Uterus (tissue), 4 donors: ENCODE measurements at regions of chr7 and their contacts with region 1.

Region 1: GRCh38 chr7:48109848-48110663 is 21.0 kb downstream of the UPP1 start:
- DNase-seq: peak; percentile 72 to 77
- H3K4me3 ChIP-seq: no peak overlapping the region
- H3K27ac ChIP-seq: no peak overlapping the region
- H3K4me1 ChIP-seq: no peaks in the 10 kb centered on the region
- H3K27me3 ChIP-seq: no peaks in the 10 kb centered on the region
- CTCF ChIP-seq: peak; percentile 92 to 99 (median 96)
- POLR2A ChIP-seq: peak in 1 of 2 donors; percentile 22

Region 2: GRCh38 chr7:47914717-47915615 is 195.1 kb before region 1 on chr7:
- intact Hi-C with region 1: no loop called
- DNase-seq: no peak
- H3K4me3 ChIP-seq: no peak overlapping the region
- H3K27ac ChIP-seq: no peak overlapping the region
- H3K4me1 ChIP-seq: no peaks in the 10 kb centered on the region
- H3K27me3 ChIP-seq: no peaks in the 10 kb centered on the region
- CTCF ChIP-seq: no peak
- POLR2A ChIP-seq: no peak

Region 3: GRCh38 chr7:47945261-47946001 is 164.6 kb before region 1 on chr7:
- intact Hi-C with region 1: loop called (anchors 10 kb)
- DNase-seq: peak; percentile 72 to 80
- H3K4me3 ChIP-seq: no peak overlapping the region
- H3K27ac ChIP-seq: peak overlapping the region in 1 of 2 donors; percentile 23
- H3K4me1 ChIP-seq: no peaks in the 10 kb centered on the region
- H3K27me3 ChIP-seq: no peaks in the 10 kb centered on the region
- CTCF ChIP-seq: peak; percentile 66 to 80 (median 76)
- POLR2A ChIP-seq: no peak

Region 4: GRCh38 chr7:47991741-47992311 is 118.2 kb before region 1 on chr7:
- intact Hi-C with region 1: loop called (anchors 10 kb)
- DNase-seq: peak; percentile 78 to 80
- H3K4me3 ChIP-seq: peak overlapping the region; percentile 36 to 37
- H3K27ac ChIP-seq: peak overlapping the region; percentile 25 to 55
- H3K4me1 ChIP-seq: no peaks in the 10 kb centered on the region
- H3K27me3 ChIP-seq: no peaks in the 10 kb centered on the region
- CTCF ChIP-seq: peak; percentile 63 to 71 (median 65)
- POLR2A ChIP-seq: no peak

Region 5: GRCh38 chr7:48035301-48035966 is 74.6 kb before region 1 on chr7 and contains the start of gene C7orf57:
- intact Hi-C with region 1: loop called (anchors 10 kb)
- DNase-seq: peak; percentile 73 to 83
- H3K4me3 ChIP-seq: peak within 1 kb of the TSS; percentile 30 to 37
- H3K27ac ChIP-seq: no peak within 1 kb of the TSS
- H3K4me1 ChIP-seq: no peaks in the 10 kb centered on the region
- H3K27me3 ChIP-seq: no peaks in the 10 kb centered on the region
- CTCF ChIP-seq: peak; percentile 15 to 46 (median 34)
- POLR2A ChIP-seq: no peak
- total RNA-seq, gene C7orf57: 0.76 TPM in 1 of 4 donors, not detected in the others

Region 6: GRCh38 chr7:48144291-48144768 is 34.3 kb after region 1 on chr7:
- intact Hi-C with region 1: no loop called
- DNase-seq: no peak
- H3K4me3 ChIP-seq: no peak overlapping the region
- H3K27ac ChIP-seq: no peak overlapping the region
- H3K4me1 ChIP-seq: no peaks in the 10 kb centered on the region
- H3K27me3 ChIP-seq: no peaks in the 10 kb centered on the region
- CTCF ChIP-seq: no peak
- POLR2A ChIP-seq: no peak

Region 7: GRCh38 chr7:48173756-48174382 is 63.8 kb after region 1 on chr7:
- intact Hi-C with region 1: no loop called
- DNase-seq: no peak
- H3K4me3 ChIP-seq: no peak overlapping the region
- H3K27ac ChIP-seq: no peak overlapping the region
- H3K4me1 ChIP-seq: no peaks in the 10 kb centered on the region
- H3K27me3 ChIP-seq: no peaks in the 10 kb centered on the region
- CTCF ChIP-seq: no peak
- POLR2A ChIP-seq: no peak

Region 8: DNA sequence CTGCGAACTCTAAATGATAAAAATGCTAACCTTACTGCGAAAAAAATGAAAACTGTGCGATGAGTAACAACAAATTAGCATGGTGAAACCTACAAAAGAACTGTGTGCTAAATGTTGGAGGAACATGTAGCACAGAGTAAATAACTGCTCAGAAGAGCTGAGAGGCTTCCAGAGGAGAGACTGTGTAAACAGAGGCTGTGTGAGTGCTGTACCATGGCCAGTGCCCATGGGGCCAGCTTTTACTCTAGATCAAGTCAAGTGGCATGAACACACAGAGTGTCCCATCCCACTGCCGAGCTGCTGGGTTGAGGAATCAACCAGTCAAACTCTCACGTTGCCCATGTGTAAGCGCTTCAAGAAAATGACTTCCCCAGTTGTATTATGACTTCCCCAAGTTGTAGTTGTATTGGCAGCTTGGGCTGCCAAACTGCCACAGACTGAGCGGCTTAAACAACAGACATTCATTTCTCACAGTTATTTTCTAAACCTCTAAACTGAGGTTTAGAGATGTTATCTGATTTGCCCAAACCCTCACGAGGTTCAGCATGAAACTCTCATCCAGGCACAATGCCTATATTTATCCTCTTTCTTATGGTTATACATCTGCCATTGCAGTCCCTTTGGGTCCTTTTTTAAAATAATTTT is 331.9 kb after region 1 on chr7:
- intact Hi-C with region 1: no loop called
- DNase-seq: no peak
- H3K4me3 ChIP-seq: no peak overlapping the region
- H3K27ac ChIP-seq: no peak overlapping the region
- H3K4me1 ChIP-seq: no peaks in the 10 kb centered on the region
- H3K27me3 ChIP-seq: no peaks in the 10 kb centered on the region
- CTCF ChIP-seq: no peak
- POLR2A ChIP-seq: no peak